Activated CD8-positive, alpha-beta T cell treated with anti-CD3 and anti-CD28 coated beads, Interleukin-2, amount 10 ng/mL, durations not matched to agents 7 days and 5 days (primary cell): ENCODE measurements at regions of chr12 and their contacts with region 1.

Region 1: DNA sequence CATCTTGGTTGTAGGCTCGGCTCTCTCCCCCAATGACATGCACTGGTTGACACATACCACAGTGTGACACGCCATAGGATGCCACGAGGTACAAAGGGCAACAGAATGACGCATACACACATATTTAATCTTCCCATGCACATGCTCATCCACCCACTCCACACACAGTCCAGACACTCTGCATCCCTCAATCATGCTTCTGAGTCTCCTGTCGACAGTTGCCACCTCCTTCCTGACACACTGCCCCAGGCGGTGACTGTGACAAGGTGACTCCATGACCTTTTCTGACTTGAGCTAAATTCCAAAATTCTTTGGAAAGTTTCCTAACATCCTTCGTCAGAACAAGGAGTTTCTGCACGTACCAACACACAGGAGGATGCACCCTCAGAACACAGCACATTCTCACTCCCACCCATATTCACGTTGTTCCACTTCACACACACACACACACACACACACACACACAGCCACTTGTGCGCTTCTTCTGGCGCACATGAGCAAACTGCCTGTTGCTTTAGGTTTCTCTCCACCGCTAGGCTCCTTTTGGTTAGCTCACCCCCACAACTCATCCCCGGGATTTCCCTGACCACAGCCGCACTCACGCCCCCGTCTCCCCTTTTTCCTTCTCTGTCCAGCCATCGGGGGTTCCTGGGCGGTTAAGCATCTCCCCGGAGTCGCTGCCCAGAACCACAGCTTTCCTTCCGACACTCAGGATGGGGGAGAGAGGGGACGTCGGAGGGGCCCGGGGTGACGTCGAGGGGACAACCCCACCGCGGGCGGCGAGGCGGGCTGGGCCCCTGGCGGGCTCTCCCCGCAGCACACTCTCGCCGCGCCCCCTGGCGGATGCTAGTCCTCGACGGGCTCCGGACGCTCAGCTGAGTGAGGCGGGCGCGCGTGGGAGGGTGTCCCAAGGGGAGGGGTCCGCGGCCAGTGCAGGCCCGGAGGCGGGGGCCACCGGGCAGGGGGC is 524 bp upstream of the WNT1 start:
- DNase-seq: peak; percentile 80
- ATAC-seq: peak; percentile 54
- H3K4me3 Mint-ChIP-seq: peak overlapping the region; percentile 47
- H3K27ac Mint-ChIP-seq: peak overlapping the region; percentile 32
- H3K4me1 Mint-ChIP-seq: peaks cover 58% of the 10 kb centered on the region
- H3K27me3 Mint-ChIP-seq: peaks cover 72% of the 10 kb centered on the region

Region 2: DNA sequence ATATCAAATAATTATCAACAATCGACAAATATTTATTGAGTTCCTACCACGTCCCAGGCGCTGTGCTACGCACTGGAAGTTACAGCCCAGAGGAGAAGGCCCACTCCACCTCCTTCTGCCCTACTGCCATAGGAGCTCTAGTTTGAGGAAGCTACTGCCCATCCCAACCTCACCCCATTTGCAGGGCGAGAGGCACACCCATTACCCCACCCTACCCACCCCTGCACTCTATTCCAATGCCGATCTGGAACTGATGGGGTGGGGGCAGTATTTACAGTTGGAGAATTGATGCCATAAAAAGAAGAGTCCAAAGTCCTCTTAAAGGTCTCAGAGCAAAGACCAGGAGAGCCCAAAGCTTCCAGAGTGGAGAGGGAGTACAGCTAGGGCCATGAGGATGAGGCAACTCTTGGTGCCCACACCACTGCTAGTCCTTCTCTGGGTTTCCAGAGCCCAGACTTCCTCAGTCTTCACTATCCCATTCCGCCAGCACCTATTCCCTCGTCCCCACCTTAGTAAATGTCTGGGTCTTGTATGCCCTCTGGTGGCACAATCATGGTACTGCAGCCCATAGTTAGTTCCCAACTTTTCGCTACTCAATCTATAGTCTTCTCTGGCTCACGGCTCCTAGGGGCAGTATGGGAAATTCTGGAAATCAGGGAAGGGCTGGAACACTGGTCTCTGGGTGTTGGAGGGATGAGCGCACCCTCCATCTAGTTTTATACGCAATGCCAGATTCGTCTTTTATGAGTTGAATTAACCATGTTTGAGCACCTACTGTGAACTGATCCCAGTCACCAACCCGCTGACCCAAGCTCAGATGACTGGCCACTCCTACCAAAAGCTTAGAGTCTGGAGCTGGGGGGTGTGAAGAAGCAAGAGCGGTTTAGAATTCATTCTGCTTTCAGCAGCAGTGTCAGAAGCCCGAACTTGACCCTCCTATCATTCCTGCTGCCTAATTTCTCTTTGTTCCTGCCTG is 181.8 kb before region 1 on chr12:
- CTCF ChIA-PET with region 1: no interaction called
- POLR2A ChIA-PET with region 1: no interaction called
- DNase-seq: peak; percentile 70
- ATAC-seq: peak; percentile 72
- H3K4me3 Mint-ChIP-seq: no peak overlapping the region
- H3K27ac Mint-ChIP-seq: no peak overlapping the region
- H3K4me1 Mint-ChIP-seq: peaks cover 14% of the 10 kb centered on the region
- H3K27me3 Mint-ChIP-seq: peaks cover 14% of the 10 kb centered on the region

Region 3: DNA sequence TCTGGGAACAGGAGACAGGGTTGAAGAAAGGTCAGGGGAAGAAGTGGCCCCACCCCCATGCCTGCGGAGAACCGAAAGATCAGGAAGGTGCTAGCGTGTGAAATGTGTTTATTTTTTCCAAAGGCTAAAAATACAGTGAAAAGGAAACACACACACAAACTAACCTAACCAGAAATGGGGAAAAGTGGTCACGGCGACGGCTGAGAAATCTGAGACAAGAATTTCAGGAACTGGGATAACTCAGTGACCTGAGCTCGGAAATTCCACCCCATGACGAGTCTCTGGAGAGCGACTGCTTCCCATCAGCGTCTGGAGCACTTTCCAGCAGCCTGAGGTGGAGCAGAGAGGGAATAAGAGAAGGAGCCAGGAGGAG is 95.3 kb before region 1 on chr12:
- CTCF ChIA-PET with region 1: no interaction called
- POLR2A ChIA-PET with region 1: no interaction called
- DNase-seq: no peak
- ATAC-seq: no peak
- H3K4me3 Mint-ChIP-seq: no peak overlapping the region
- H3K27ac Mint-ChIP-seq: no peak overlapping the region
- H3K4me1 Mint-ChIP-seq: peaks cover 7% of the 10 kb centered on the region
- H3K27me3 Mint-ChIP-seq: peaks cover 32% of the 10 kb centered on the region

Region 4: GRCh38 chr12:48917857-48918537 is 59.6 kb before region 1 on chr12:
- CTCF ChIA-PET with region 1: interaction called, 45 read pairs
- POLR2A ChIA-PET with region 1: no interaction called
- DNase-seq: peak; percentile 68
- ATAC-seq: peak; percentile 83
- H3K4me3 Mint-ChIP-seq: peak overlapping the region; percentile 75
- H3K27ac Mint-ChIP-seq: peak overlapping the region; percentile 88
- H3K4me1 Mint-ChIP-seq: peaks cover 19% of the 10 kb centered on the region
- H3K27me3 Mint-ChIP-seq: no peaks in the 10 kb centered on the region

Region 5: GRCh38 chr12:48924617-48925303 is 52.8 kb before region 1 on chr12:
- CTCF ChIA-PET with region 1: interaction called, 45 read pairs
- POLR2A ChIA-PET with region 1: interaction called, 4 read pairs
- DNase-seq: peak; percentile 85
- ATAC-seq: peak; percentile 87
- H3K4me3 Mint-ChIP-seq: peak overlapping the region; percentile 93
- H3K27ac Mint-ChIP-seq: peak overlapping the region; percentile 95
- H3K4me1 Mint-ChIP-seq: peaks cover 21% of the 10 kb centered on the region
- H3K27me3 Mint-ChIP-seq: no peaks in the 10 kb centered on the region

Region 6: DNA sequence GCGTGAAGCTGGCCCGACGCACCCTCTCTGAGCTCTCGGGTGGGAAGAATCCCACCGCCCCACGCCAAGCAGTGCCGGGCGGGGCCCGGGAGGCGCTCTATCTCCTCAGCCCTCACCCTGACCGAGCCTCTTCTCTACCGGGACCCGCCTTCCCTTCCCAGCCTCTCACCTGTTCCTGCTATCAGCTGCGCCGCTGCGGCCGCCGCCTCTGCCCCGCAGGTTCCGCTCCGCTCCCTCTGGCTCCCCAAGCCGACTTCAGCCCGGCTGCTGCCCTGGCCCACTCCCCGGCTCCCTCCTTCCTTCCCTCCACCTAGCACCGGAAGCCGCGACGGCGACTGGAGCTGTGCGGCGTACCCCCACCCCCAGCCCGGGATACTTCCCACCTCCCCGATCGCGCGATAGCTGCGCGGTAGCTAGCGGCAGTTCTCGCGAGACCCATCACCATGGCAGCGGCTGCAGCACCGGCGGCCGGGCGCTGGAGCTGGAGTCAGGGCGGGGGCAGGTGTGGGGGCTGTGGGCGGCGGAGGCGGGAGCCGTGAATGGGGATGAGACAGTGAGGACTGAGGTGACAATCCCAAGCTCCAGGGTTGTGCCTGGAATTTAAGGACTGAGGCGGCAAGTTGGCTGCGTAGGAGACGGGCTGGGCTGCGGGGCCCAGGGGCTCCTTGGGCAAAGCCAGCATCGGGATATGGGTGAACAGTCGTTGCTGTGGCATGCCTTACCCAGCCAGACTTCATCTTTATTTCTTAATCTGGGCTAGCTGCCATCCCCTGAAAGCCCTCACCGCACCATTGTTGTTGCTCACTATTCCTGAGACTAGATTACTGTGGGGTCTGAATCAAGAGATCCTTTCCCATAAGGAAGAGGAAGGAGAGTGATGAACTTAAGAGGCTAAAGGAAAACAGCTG is 20.2 kb before region 1 on chr12 and contains the start of gene ARF3:
- CTCF ChIA-PET with region 1: interaction called, 15 read pairs
- POLR2A ChIA-PET with region 1: interaction called, 5 read pairs
- DNase-seq: peak; percentile 95
- ATAC-seq: peak; percentile 96
- H3K4me3 Mint-ChIP-seq: peak within 1 kb of the TSS; percentile 94
- H3K27ac Mint-ChIP-seq: peak within 1 kb of the TSS; percentile 85
- H3K4me1 Mint-ChIP-seq: peaks cover 33% of the 10 kb centered on the region
- H3K27me3 Mint-ChIP-seq: peaks cover 14% of the 10 kb centered on the region
- total RNA-seq, gene ARF3: 104 to 108 TPM

Region 7: GRCh38 chr12:48995061-48995879 is 17.7 kb after region 1 on chr12:
- CTCF ChIA-PET with region 1: interaction called, 18 read pairs
- POLR2A ChIA-PET with region 1: interaction called, 3 read pairs
- DNase-seq: peak; percentile 64
- ATAC-seq: peak; percentile 43
- H3K4me3 Mint-ChIP-seq: no peak overlapping the region
- H3K27ac Mint-ChIP-seq: no peak overlapping the region
- H3K4me1 Mint-ChIP-seq: peaks cover 36% of the 10 kb centered on the region
- H3K27me3 Mint-ChIP-seq: peaks cover 58% of the 10 kb centered on the region

Region 8: DNA sequence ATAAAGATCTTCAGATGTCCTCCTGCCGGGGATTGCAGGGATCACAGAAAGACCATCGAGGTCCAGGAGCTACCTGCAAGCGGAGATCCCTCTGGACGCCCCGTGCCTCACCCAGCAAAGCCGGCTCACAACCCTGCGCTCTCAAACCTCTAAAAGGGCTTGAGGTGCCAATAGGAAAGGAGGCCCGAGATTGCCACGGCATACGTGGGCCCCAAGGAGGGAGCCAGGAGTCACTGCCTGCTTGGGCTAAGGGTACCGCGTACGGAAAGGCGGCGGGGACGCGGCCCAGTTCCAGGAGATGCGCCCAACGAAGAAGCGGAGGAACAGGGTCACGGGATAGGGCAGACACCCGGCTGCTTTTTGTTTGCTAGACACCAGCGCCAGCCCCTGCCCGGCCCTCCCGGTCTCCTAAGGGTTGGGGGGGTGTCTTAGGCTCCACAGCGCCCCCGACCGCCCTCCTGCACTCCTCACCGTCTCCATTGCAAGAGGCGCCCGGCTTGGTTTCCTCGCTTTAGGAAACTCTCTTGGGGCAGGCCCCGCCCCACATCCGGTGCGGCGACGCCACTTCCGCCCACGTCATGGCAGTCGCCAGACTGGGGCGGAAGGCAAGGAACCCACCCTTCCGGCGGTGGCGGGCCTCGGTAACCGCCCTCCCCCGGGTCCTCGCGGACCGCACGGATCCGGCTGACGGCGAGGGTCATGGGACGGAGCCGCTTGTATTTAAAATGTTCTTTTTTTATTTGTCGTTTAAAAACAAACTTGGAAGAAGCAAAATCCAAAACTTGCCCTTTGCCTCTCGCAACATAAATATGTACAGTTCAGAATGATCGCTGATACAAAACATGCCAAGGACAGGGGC is 40.9 kb after region 1 on chr12 and contains the start of gene PRKAG1:
- CTCF ChIA-PET with region 1: interaction called, 10 read pairs
- POLR2A ChIA-PET with region 1: no interaction called
- DNase-seq: peak; percentile 97
- ATAC-seq: peak; percentile 93
- H3K4me3 Mint-ChIP-seq: peak within 1 kb of the TSS; percentile 92
- H3K27ac Mint-ChIP-seq: peak within 1 kb of the TSS; percentile 98
- H3K4me1 Mint-ChIP-seq: peaks cover 33% of the 10 kb centered on the region
- H3K27me3 Mint-ChIP-seq: no peaks in the 10 kb centered on the region
- total RNA-seq, gene PRKAG1: 57.5 to 59.8 TPM

Region 9: DNA sequence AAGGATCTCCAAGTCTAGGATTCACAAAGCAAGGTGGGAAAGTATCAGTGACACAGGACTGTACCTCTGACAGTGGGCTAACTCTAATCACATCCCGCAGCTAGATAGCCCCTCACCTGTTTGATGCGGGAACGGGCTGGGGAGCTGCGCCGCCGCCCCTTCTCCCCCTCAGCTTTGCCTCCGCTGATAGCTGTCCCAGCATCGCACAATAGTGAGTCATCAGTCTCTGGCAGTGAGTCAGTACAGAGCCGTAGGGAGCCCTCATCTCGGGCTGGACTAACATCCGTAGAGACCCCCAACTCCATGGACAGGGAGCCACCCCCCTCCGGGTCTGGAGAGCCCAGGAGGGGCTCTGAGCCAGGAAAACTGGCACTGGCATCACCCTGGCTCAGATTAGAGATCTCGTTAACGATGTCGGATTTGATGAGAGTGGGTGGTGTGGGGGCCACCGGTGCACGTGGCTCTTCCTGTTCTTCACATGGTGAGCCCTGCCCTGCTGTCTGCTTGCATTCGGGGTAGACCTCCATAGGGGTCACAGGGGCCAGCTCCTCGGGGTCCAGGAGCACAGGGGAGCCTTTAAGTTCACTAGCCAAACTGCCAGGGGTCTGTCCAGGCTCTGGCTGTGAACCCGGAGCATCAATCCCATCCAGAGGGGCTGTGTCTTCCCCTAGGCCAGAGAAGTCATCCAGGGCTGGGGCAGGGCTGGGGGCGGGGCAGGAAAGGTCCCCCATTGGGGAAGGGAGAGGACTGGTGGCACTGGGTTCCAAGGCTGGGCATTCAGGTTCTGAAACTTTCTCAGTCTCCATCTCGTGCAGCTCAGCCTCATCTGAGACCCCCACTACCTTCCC is 72.2 kb after region 1 on chr12:
- CTCF ChIA-PET with region 1: no interaction called
- POLR2A ChIA-PET with region 1: no interaction called
- DNase-seq: no peak
- ATAC-seq: no peak
- H3K4me3 Mint-ChIP-seq: no peak overlapping the region
- H3K27ac Mint-ChIP-seq: no peak overlapping the region
- H3K4me1 Mint-ChIP-seq: peaks cover 3% of the 10 kb centered on the region
- H3K27me3 Mint-ChIP-seq: no peaks in the 10 kb centered on the region

Region 10: DNA sequence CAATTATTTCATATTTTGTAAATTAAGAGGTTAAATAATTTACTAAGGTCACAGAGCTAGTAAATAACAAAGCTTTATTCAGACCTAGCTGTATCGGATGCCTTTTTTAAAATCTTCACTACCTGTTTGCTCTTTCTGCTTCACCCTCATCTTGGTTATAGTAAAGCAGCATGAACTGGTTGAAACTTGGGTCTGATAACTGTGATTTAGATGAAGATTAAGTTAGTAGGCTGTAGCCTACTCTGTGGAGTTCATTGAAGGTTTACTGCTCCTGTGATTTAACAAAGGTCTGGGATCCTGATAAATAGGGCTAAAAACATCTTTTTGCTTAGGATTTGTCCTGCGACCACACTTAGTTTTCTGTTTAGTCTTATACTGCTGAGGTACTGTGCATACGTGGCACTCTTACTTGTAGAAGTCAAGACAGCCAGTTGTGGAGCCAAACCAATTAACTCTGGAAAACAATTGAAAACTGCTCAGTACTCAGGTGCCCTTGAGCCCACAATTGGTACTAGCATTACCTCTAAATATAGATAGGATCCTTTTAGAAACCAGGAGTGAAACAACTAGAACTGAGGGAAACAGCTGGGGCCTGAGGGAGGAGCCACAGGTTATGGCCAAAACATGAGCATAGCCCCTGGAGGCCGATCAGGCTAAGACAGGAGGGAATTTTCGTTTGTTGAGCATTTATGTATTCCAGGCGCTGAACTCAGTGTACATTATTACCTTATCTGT is 392.0 kb after region 1 on chr12:
- CTCF ChIA-PET with region 1: no interaction called
- POLR2A ChIA-PET with region 1: no interaction called
- DNase-seq: peak; percentile 46
- ATAC-seq: no peak
- H3K4me3 Mint-ChIP-seq: no peak overlapping the region
- H3K27ac Mint-ChIP-seq: no peak overlapping the region
- H3K4me1 Mint-ChIP-seq: peaks cover 38% of the 10 kb centered on the region
- H3K27me3 Mint-ChIP-seq: no peaks in the 10 kb centered on the region